PC-9 (cell line): ENCODE measurements at regions of chr5 and their contacts with region 1.

Region 1: DNA sequence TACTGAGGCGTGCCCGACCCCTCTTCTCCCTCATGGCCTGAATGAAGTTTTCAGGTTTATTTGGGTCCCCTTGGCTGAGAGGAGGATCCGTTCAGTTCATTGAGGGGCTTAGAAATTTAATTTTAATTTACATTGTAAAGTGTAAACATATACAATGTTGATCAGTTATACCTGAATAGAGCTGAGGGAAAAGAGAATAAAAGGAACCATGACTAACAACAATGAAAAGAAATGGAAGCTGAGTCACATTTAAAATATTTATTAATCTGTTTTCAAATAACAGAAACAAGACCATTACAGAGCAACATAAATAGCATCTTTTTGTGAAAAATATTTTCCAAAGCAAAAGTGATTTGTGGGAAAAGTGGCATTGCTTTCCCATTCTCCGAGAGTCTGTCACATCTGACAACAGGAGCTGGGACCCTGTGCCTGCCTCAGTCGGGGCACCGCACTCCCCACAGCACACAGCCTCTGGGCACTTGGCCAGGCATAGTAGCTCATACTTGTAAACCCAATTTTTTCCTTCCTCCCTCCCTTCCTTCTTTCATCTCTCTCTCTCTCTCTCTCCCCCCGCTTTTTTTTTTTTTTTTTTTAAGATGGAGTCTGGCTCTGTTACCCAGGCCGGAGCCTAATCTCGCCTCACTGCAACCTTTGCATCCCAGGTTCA is 28.7 kb downstream of the PROP1 start:
- DNase-seq: no peak
- H3K4me3 ChIP-seq: no peak overlapping the region
- H3K27ac ChIP-seq: no peak overlapping the region
- H3K4me1 ChIP-seq: no peaks in the 10 kb centered on the region
- H3K27me3 ChIP-seq: peaks cover 93% of the 10 kb centered on the region
- CTCF ChIP-seq: no peak

Region 2: GRCh38 chr5:176466245-176466871 is 1501.0 kb before region 1 on chr5:
- CTCF ChIA-PET with region 1: no interaction called
- POLR2A ChIA-PET with region 1: no interaction called
- intact Hi-C with region 1: no loop called
- DNase-seq: peak in 1 of 2 experiments; percentile 37
- H3K4me3 ChIP-seq: no peak overlapping the region
- H3K27ac ChIP-seq: peak overlapping the region; percentile 19; the same call in 1 of the 2 replicates
- H3K4me1 ChIP-seq: peaks cover 9% of the 10 kb centered on the region
- H3K27me3 ChIP-seq: no peaks in the 10 kb centered on the region
- CTCF ChIP-seq: no peak

Region 3: GRCh38 chr5:177992466-177992865 is 25.1 kb after region 1 on chr5:
- CTCF ChIA-PET with region 1: no interaction called
- POLR2A ChIA-PET with region 1: interaction called, 34 read pairs
- intact Hi-C with region 1: no loop called
- DNase-seq: no peak
- H3K4me3 ChIP-seq: no peak overlapping the region
- H3K27ac ChIP-seq: no peak overlapping the region
- H3K4me1 ChIP-seq: no peaks in the 10 kb centered on the region
- H3K27me3 ChIP-seq: peaks cover 94% of the 10 kb centered on the region
- CTCF ChIP-seq: no peak